H1 (cell line): ENCODE measurements at regions of chr10 and their contacts with region 1.

Region 1: DNA sequence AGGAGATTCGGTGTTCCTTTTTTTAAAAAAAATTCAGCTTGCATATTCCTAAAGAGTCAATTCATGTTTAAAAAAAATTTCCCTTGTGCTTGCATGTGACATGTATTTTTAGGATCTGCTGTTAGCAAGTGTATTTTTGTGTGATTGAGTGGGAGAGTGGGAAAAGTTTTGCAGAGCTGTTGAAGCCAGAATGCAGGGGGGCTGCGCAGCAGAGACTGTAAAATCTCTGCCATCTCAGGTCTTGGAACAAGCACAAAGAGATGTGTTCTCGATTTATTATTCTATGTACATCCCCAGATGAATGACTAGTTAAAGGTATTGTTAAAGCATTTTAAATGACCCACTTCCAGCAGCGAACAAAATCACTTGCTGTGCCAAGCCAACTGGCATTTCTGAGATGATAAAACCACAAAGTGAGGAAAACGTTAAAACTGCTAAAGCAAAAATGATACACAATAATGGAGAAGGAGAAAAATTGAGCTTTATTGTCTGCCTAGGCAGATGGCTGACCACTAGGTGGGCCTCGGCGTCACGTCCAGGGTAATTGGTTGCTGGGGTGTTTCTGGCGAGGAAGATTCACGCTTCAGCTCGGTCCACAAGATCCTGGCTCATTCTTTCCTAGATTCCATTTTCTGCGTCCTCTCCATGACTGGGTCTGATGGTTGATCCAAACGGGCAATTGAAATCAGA is 67.0 kb upstream of the ATRNL1 start:
- DNase-seq: peak in 1 of 2 experiments; percentile 34
- H3K4me3 ChIP-seq: no peak overlapping the region
- H3K27ac ChIP-seq: no peak overlapping the region
- H3K4me1 ChIP-seq: peaks cover 0 to 3% (median 1%) of the 10 kb centered on the region in 4 experiments; a peak in 1 of 7 replicates
- H3K27me3 ChIP-seq: no peaks in the 10 kb centered on the region
- CTCF ChIP-seq: peak; percentile 20 to 53 (median 43); a peak in 3 of 4 replicates
- EP300 ChIP-seq: no peak
- POLR2A ChIP-seq: no peak
- RAD21 ChIP-seq: peak; percentile 29 to 46; a peak in 2 of 4 replicates

Region 2: GRCh38 chr10:115001506-115002381 is 24.5 kb before region 1 on chr10:
- CTCF ChIA-PET with region 1: interaction called, 13 read pairs
- POLR2A ChIA-PET with region 1: no interaction called
- DNase-seq: no peak
- H3K4me3 ChIP-seq: no peak overlapping the region
- H3K27ac ChIP-seq: no peak overlapping the region
- H3K4me1 ChIP-seq: peaks cover 0 to 8% (median 3%) of the 10 kb centered on the region in 4 experiments; a peak in 4 of 7 replicates
- H3K27me3 ChIP-seq: no peaks in the 10 kb centered on the region
- CTCF ChIP-seq: no peak
- EP300 ChIP-seq: no peak
- POLR2A ChIP-seq: no peak
- RAD21 ChIP-seq: no peak

Region 3: DNA sequence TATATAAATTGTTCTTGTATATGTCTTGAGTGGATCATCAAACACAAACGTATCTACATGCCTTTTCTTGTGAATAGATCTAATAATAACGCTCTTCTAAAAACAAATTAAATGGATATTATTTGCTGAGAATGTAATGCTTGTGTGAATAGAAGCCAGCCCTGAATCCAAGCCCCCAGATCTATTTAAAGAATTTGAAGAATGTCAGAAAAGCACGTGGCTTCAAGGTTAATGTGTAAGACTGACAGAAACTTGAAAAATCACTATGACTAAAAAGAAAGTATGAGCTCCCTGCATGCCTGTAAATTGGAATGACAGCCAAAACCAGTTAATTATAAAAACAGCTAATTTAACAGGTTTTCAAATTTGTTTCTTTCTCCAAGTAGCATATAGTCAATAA is 23.8 kb after region 1 on chr10:
- CTCF ChIA-PET with region 1: interaction called, 13 read pairs
- POLR2A ChIA-PET with region 1: interaction called, 3 read pairs
- DNase-seq: no peak
- H3K4me3 ChIP-seq: no peak overlapping the region
- H3K27ac ChIP-seq: no peak overlapping the region
- H3K4me1 ChIP-seq: peaks cover 0 to 2% (median 0%) of the 10 kb centered on the region in 4 experiments; a peak in 2 of 7 replicates
- H3K27me3 ChIP-seq: no peaks in the 10 kb centered on the region
- CTCF ChIP-seq: no peak
- EP300 ChIP-seq: no peak
- POLR2A ChIP-seq: no peak
- RAD21 ChIP-seq: no peak